ENCODE measurements at regions of chr9 and their contacts with region 1.

Region 1: GRCh38 chr9:21477466-21477865 is 4.6 kb downstream of the IFNE start:
- DNase-seq: no peak
- H3K4me3 ChIP-seq: no peak overlapping the region
- H3K27ac ChIP-seq: no peak overlapping the region
- H3K4me1 ChIP-seq: no peaks in the 10 kb centered on the region
- H3K27me3 ChIP-seq: peaks cover 5% of the 10 kb centered on the region; the same call in 1 of the 2 replicates
- CTCF ChIP-seq: no peak
- EP300 ChIP-seq: no peak
- RAD21 ChIP-seq: no peak

Region 2: GRCh38 chr9:21281275-21281674 is 196.2 kb before region 1 on chr9:
- CTCF ChIA-PET with region 1: no interaction called
- POLR2A ChIA-PET with region 1: no interaction called
- DNase-seq: no peak
- H3K4me3 ChIP-seq: no peak overlapping the region
- H3K27ac ChIP-seq: no peak overlapping the region
- H3K4me1 ChIP-seq: no peaks in the 10 kb centered on the region
- H3K27me3 ChIP-seq: no peaks in the 10 kb centered on the region
- CTCF ChIP-seq: no peak
- EP300 ChIP-seq: no peak
- RAD21 ChIP-seq: no peak

Region 3: GRCh38 chr9:21465859-21466518 is 11.5 kb before region 1 on chr9:
- CTCF ChIA-PET with region 1: interaction called, 11 read pairs
- POLR2A ChIA-PET with region 1: no interaction called
- DNase-seq: peak; percentile 32
- H3K4me3 ChIP-seq: no peak overlapping the region; a peak in 1 of 4 replicates
- H3K27ac ChIP-seq: no peak overlapping the region
- H3K4me1 ChIP-seq: no peaks in the 10 kb centered on the region
- H3K27me3 ChIP-seq: no peaks in the 10 kb centered on the region; the same call in 1 of the 2 replicates
- CTCF ChIP-seq: peak; percentile 85
- EP300 ChIP-seq: no peak
- RAD21 ChIP-seq: peak; percentile 67